Common myeloid progenitor, CD34-positive (primary cell): ENCODE measurements at regions of chr3 and their contacts with region 1.

Region 1: GRCh38 chr3:38473229-38473628 is 19.5 kb downstream of the ACVR2B start:
- DNase-seq: no peak
- H3K4me3 ChIP-seq: no peak overlapping the region
- H3K27ac ChIP-seq: no peak overlapping the region
- H3K4me1 ChIP-seq: peaks cover 0 to 3% (median 0%) of the 10 kb centered on the region in 4 experiments
- H3K27me3 ChIP-seq: no peaks in the 10 kb centered on the region

Region 2: GRCh38 chr3:38346587-38347410 is 126.4 kb before region 1 on chr3 and contains the start of gene XYLB:
- CTCF ChIA-PET with region 1: interaction called, 98 read pairs
- POLR2A ChIA-PET with region 1: no interaction called
- DNase-seq: peak; percentile 73 to 81 (median 80)
- H3K4me3 ChIP-seq: peak within 1 kb of the TSS; percentile 28 to 86 (median 75)
- H3K27ac ChIP-seq: peak within 1 kb of the TSS in 1 of 2 experiments; percentile 25
- H3K4me1 ChIP-seq: peaks cover 0 to 14% (median 9%) of the 10 kb centered on the region in 4 experiments
- H3K27me3 ChIP-seq: no peaks in the 10 kb centered on the region

Region 3: GRCh38 chr3:38601956-38602550 is 128.8 kb after region 1 on chr3:
- CTCF ChIA-PET with region 1: no interaction called
- POLR2A ChIA-PET with region 1: no interaction called
- DNase-seq: no peak
- H3K4me3 ChIP-seq: no peak overlapping the region
- H3K27ac ChIP-seq: no peak overlapping the region
- H3K4me1 ChIP-seq: no peaks in the 10 kb centered on the region
- H3K27me3 ChIP-seq: no peaks in the 10 kb centered on the region